ENCODE measurements at regions of chr7 and their contacts with region 1.

Region 1: GRCh38 chr7:106332201-106332600 is 47.4 kb upstream of the NAMPT start:
- DNase-seq: no peak
- ATAC-seq: no peak
- H3K4me3 ChIP-seq: no peak overlapping the region
- H3K27ac ChIP-seq: no peak overlapping the region
- H3K4me1 ChIP-seq: no peaks in the 10 kb centered on the region; a peak in 1 of 5 replicates
- H3K27me3 ChIP-seq: no peaks in the 10 kb centered on the region
- CTCF ChIP-seq: no peak
- EP300 ChIP-seq: no peak
- POLR2A ChIP-seq: no peak
- RAD21 ChIP-seq: no peak

Region 2: GRCh38 chr7:105589356-105590077 is 742.7 kb before region 1 on chr7:
- CTCF ChIA-PET with region 1: no interaction called
- POLR2A ChIA-PET with region 1: no interaction called
- in situ Hi-C with region 1: no loop called
- intact Hi-C with region 1: no loop called
- DNase-seq: peak in 3 of 4 experiments; percentile 37 to 64 (median 47)
- ATAC-seq: peak; percentile 68
- H3K4me3 ChIP-seq: no peak overlapping the region
- H3K27ac ChIP-seq: no peak overlapping the region
- H3K4me1 ChIP-seq: peaks cover 0 to 13% of the 10 kb centered on the region in 2 experiments; a peak in 3 of 5 replicates
- H3K27me3 ChIP-seq: no peaks in the 10 kb centered on the region
- CTCF ChIP-seq: peak; percentile 66 to 75 (median 71)
- EP300 ChIP-seq: no peak
- POLR2A ChIP-seq: no peak
- RAD21 ChIP-seq: peak; percentile 25 to 72; a peak in 3 of 4 replicates

Region 3: DNA sequence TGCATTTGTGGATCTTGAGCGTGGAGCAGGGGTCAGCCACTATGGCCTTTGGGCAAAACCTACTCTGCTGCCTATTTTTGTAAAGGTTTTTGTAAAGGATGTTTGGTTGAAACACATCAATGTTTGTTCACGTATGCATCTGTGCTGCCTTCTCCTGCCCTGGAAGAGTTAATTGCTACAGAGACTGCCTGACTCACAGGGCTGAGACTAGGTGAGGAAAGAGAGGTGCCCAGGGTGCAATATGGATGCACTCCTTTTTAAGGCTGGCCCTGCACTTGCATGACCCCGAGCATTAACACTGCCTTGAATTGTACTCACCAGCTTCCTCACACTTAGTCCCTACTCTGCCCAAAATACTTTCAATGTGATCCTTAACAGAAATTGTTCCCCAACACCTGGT is 26.5 kb before region 1 on chr7:
- CTCF ChIA-PET with region 1: no interaction called
- POLR2A ChIA-PET with region 1: no interaction called
- in situ Hi-C with region 1: no loop called
- intact Hi-C with region 1: no loop called
- DNase-seq: no peak
- ATAC-seq: no peak
- H3K4me3 ChIP-seq: no peak overlapping the region
- H3K27ac ChIP-seq: no peak overlapping the region
- H3K4me1 ChIP-seq: no peaks in the 10 kb centered on the region
- H3K27me3 ChIP-seq: no peaks in the 10 kb centered on the region
- CTCF ChIP-seq: no peak
- EP300 ChIP-seq: no peak
- POLR2A ChIP-seq: no peak
- RAD21 ChIP-seq: no peak

Region 4: GRCh38 chr7:106317971-106318370 is 14.2 kb before region 1 on chr7:
- CTCF ChIA-PET with region 1: no interaction called
- POLR2A ChIA-PET with region 1: interaction called, 10 read pairs
- in situ Hi-C with region 1: no loop called
- intact Hi-C with region 1: no loop called
- DNase-seq: no peak
- ATAC-seq: no peak; the same call in 2 of the 3 replicates
- H3K4me3 ChIP-seq: no peak overlapping the region
- H3K27ac ChIP-seq: no peak overlapping the region
- H3K4me1 ChIP-seq: no peaks in the 10 kb centered on the region
- H3K27me3 ChIP-seq: no peaks in the 10 kb centered on the region
- CTCF ChIP-seq: no peak
- EP300 ChIP-seq: no peak
- POLR2A ChIP-seq: no peak
- RAD21 ChIP-seq: no peak

Measured in K562 (cell line).